ENCODE measurements at regions of chr15 and their contacts with region 1.

Region 1: GRCh38 chr15:75058127-75058905 is 34.9 kb downstream of the PPCDC start:
- DNase-seq: no peak
- H3K4me3 ChIP-seq: no peak overlapping the region
- H3K27ac ChIP-seq: no peak overlapping the region
- H3K4me1 ChIP-seq: peaks cover 0 to 9% (median 0%) of the 10 kb centered on the region in 4 donors
- H3K27me3 ChIP-seq: no peaks in the 10 kb centered on the region
- CTCF ChIP-seq: no peak

Region 2: GRCh38 chr15:75123395-75123794 is 65.1 kb after region 1 on chr15:
- intact Hi-C with region 1: loop called (anchors 10 kb)
- DNase-seq: no peak
- H3K4me3 ChIP-seq: no peak overlapping the region
- H3K27ac ChIP-seq: no peak overlapping the region
- H3K4me1 ChIP-seq: peaks cover 0 to 7% (median 3%) of the 10 kb centered on the region in 4 donors
- H3K27me3 ChIP-seq: no peaks in the 10 kb centered on the region
- CTCF ChIP-seq: no peak

Region 3: GRCh38 chr15:75153087-75153486 is 94.8 kb after region 1 on chr15:
- intact Hi-C with region 1: no loop called
- DNase-seq: no peak
- H3K4me3 ChIP-seq: no peak overlapping the region
- H3K27ac ChIP-seq: no peak overlapping the region
- H3K4me1 ChIP-seq: peaks cover 0 to 21% (median 3%) of the 10 kb centered on the region in 4 donors
- H3K27me3 ChIP-seq: no peaks in the 10 kb centered on the region
- CTCF ChIP-seq: no peak

Measured in tibial artery (tissue), 4 donors.